ENCODE measurements at regions of chr13 and their contacts with region 1.

Region 1: DNA sequence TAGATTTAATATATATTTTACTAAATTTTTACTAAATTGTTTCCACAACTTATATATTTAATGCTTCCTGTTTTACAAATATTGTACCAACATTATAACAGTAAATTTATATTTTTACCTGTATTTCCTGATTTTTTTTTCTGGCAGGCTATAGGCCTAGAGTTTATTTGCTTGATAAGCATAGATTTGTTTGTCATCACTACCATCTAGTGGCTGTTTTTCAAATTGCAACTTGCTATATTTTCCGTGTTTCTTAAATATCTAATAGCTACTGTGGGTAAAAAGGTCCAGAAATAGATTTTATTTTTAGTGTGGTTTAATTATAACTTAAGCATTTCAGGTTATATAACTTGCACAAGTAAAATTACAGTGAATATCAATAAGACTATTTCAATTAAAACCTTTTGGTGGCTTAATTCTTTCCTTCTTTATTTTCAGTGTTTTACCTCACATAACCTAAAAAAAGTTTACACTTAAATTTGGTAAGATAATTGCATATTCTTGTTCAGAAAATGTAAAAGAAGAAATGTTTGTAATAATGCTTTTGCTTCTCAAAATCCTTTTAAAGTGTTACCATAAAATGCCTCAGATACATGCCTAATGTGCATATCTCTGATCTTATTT is 60.6 kb downstream of the NDFIP2 start:
- DNase-seq: peak in 1 of 2 experiments; percentile 46
- H3K4me3 ChIP-seq: no peak overlapping the region
- H3K27ac ChIP-seq: no peak overlapping the region
- H3K4me1 ChIP-seq: no peaks in the 10 kb centered on the region
- H3K27me3 ChIP-seq: no peaks in the 10 kb centered on the region
- CTCF ChIP-seq: peak; percentile 94

Region 2: DNA sequence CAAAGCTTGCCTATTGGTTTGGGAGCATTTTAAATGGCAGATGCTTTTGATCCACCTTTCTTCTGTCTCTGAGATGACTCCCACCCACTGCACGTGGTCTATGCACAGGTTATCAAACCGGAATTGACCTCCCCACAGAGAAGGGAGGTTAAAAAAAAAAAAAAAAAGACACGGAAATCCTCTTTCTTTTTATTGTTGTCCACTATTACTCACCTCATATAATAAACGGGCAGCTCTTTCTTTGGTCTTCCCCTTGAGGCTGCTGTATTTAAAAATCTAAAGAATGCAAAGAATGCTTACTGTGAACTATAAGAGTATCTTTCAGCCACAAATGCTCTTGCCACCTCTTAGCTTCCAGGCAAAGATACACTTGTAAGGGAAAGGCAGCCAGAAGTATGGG is 269.1 kb after region 1 on chr13:
- CTCF ChIA-PET with region 1: interaction called, 11 read pairs
- POLR2A ChIA-PET with region 1: no interaction called
- intact Hi-C with region 1: no loop called
- DNase-seq: peak; percentile 21 to 83
- H3K4me3 ChIP-seq: no peak overlapping the region
- H3K27ac ChIP-seq: peak overlapping the region; percentile 18; the same call in 1 of the 2 replicates
- H3K4me1 ChIP-seq: peaks cover 13% of the 10 kb centered on the region
- H3K27me3 ChIP-seq: no peaks in the 10 kb centered on the region
- CTCF ChIP-seq: no peak

Region 3: GRCh38 chr13:80109303-80109702 is 567.8 kb after region 1 on chr13:
- CTCF ChIA-PET with region 1: no interaction called
- POLR2A ChIA-PET with region 1: no interaction called
- intact Hi-C with region 1: no loop called
- DNase-seq: no peak
- H3K4me3 ChIP-seq: no peak overlapping the region
- H3K27ac ChIP-seq: no peak overlapping the region
- H3K4me1 ChIP-seq: no peaks in the 10 kb centered on the region
- H3K27me3 ChIP-seq: no peaks in the 10 kb centered on the region
- CTCF ChIP-seq: no peak